Activated T-helper 1 cell treated with anti-CD3 and anti-CD28 coated beads, Interleukin-12 subunit alpha, Interleukin-12 subunit beta, Interleukin-2, Interleukin-4 antibody, amounts not matched to agents 30 ng/mL and 10 ng/mL and 1 ng/mL, durations not matched to agents 14 hours and 24 hours and 36 hours (primary cell): ENCODE measurements at regions of chr7 and their contacts with region 1.

Region 1: DNA sequence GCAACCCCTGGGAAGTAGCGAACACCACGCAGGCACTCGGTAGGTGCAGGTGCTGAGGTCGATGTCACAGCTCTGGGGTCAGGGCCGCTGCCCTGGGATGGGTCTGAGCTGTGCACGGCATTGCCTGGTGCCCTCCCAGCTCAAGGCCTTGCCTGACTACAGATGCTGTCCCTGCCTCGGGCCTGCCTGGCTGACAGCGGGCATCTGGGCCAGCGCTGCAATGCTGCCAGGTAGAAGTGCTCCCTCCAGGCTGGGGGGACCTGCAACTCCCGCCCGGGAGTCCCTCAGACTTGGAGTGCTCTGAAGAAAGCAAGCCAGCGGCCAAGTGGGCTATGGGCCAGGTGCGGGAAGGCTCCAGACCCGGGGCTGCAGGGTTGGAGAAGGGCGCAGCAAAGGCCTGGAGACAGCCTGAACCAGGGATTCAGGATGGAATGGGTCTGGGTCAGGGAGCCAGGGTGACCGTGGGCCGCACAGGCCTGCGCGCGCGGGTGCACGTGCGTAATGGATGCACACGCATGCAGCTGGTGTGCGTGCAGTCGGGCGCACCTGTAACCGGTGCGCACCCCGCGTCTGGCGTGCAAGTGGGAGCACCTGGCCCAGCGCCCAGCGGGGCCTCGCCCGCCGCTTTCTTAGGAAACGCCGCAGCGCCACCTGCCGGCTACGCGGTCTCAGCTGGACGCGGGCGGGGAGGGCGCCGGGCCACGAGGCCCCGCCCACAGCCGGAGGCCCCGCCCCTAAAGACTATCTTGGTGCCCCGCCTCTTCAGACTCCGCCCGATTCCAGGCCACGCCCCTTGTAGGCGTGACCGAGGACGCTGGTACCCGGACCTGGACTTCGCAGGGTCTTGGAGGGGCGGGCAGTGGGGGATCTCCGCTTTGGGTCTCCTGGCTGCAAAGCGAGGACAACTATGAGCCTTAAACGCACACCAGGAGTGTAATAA is 46.7 kb downstream of the MICALL2 start:
- DNase-seq: peak; percentile 79
- H3K4me3 Mint-ChIP-seq: no peak overlapping the region
- H3K27ac Mint-ChIP-seq: no peak overlapping the region
- H3K4me1 Mint-ChIP-seq: peaks cover 12% of the 10 kb centered on the region
- H3K27me3 Mint-ChIP-seq: peaks cover 2% of the 10 kb centered on the region

Region 2: DNA sequence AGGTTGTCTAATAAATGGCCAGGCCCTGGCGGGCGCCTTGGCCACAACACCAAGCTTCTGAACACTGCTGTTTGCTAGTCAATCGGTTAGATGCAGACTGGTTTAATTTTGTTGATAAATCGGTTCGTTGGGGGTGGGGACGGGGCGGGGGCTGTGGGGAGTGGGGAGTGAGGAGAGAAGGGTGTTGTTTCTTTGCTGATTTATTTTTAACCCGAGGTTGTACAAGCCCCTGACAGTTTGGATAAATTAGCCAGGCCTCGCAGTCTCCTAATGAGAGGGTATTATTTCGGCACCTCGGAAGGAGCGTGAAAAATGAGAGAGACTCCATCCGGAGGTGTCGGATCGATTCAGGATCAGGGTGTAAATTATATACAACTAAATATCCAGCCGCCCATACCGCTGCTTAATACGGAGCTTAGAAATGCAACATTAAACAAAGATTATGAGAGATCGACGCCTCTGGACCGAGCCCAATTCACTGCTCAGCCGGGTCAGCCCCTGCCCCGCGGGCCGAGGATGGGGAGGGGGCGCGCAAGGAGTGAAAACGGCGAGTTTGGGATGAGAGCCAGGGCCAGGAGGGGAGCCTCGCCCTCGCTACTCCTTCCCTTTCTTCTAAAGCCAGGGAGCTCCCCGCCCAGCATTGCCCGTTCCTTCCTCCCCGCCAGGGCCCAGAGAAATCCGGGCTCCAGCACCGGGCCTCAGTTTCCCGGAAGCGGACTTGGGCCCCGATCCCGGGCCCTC is 171.9 kb before region 1 on chr7:
- intact Hi-C with region 1: loop called (anchors 5 kb)
- DNase-seq: no peak
- H3K4me3 Mint-ChIP-seq: no peak overlapping the region
- H3K27ac Mint-ChIP-seq: peak overlapping the region; percentile 52
- H3K4me1 Mint-ChIP-seq: no peaks in the 10 kb centered on the region
- H3K27me3 Mint-ChIP-seq: peaks cover 55% of the 10 kb centered on the region

Region 3: DNA sequence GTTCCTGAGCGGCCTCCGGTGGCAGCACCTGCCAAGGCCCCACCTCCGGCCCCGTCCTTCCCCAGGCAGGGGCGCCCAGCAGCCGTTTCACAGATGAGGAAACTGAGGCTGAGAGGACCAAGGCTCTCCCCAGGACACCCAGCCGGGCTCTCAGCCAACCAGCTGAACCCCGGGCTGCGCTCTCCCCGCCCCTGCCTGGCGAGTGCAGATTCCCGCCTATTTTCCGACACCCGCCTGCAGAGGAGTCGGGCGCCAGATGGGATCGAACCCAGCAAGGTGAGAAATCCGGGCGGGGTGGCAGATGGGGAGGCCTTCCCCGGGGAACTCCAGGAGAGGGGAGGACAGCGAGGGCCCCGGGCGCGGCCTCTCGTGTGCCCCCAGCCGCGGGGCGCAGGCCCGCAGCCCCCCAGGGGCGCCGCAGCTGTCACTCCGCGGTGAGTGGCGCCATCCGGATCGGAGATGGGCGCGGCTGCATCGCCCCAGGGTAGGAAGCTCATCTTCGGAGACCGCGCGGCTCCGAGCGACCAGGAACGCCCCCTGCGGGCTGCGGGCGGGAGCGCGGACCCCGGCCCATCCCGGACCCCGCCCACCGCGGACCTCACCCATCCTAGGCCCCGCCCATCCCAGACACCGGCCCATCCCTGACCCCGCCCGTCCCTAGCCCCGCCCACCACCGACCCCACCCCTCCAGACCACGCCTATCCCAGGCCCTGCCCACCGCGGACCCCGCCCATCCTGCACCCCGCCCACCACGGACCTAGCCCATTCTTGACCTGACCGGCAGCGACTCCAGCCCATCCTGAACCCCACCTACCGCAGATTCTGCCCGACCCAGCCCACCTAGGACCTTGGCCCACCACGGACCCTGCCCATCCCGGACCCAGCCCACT is 43.7 kb before region 1 on chr7:
- intact Hi-C with region 1: loop called (anchors 1 kb)
- DNase-seq: no peak
- H3K4me3 Mint-ChIP-seq: no peak overlapping the region
- H3K27ac Mint-ChIP-seq: no peak overlapping the region
- H3K4me1 Mint-ChIP-seq: peaks cover 6% of the 10 kb centered on the region
- H3K27me3 Mint-ChIP-seq: peaks cover 23% of the 10 kb centered on the region

Region 4: DNA sequence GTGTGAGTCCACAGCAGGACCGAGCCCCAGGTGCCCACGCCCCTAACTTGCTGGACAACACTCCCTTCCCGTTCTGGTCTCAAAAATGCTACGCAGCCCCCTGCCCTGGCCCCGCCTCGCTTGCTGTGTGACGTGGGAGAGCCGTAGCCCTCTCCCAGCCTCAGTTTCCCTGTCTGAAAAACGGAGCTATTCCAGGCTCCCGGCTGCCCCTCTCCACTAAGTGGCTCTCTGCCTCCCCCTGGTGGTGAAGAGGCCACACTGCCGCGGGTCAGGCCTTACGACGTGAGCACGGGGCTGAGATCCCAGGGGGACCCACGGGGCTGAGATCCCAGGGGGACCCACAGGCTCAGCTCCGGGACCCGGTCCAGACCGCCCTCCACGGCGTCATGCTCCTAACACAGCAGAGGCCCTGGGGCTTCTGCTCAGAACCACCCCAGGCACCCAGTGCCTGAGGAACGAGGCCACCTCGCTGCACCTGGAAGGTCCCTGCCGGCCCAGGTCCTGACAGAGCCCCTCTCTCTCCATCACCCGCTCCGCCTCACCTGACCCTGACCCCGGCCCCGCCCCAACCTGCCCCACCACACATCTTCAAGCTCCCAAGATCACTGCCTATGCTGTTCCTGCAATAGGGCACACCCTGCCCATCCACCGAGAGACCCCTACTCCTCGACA is 20.0 kb after region 1 on chr7:
- intact Hi-C with region 1: loop called (anchors 2 kb)
- DNase-seq: peak; percentile 54
- H3K4me3 Mint-ChIP-seq: no peak overlapping the region
- H3K27ac Mint-ChIP-seq: no peak overlapping the region
- H3K4me1 Mint-ChIP-seq: peaks cover 5% of the 10 kb centered on the region
- H3K27me3 Mint-ChIP-seq: peaks cover 4% of the 10 kb centered on the region

Region 5: DNA sequence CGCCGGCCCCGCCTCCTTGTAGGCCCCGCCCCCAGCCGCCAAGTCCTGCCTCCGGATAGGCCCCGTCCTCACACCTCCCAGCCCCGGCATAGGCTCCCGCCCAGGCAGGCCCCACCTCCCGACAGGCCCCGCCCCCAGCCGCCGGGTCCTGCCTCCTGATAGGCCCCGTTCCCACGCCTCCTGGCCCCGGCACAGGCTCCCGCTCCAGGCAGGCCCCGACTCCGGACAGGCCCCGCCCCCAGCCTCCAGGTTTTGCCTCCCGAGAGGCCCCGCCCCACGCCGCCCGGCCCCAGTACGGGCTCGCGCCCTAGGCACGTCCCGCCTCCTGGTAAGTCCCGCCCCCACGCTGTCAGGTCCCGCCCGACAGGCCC is 46.9 kb after region 1 on chr7:
- intact Hi-C with region 1: loop called (anchors 1 kb)
- DNase-seq: peak; percentile 96
- H3K4me3 Mint-ChIP-seq: peak overlapping the region; percentile 72
- H3K27ac Mint-ChIP-seq: no peak overlapping the region
- H3K4me1 Mint-ChIP-seq: no peaks in the 10 kb centered on the region
- H3K27me3 Mint-ChIP-seq: peaks cover 4% of the 10 kb centered on the region

Region 6: GRCh38 chr7:1503816-1504775 is 91.5 kb after region 1 on chr7 and contains the start of gene INTS1:
- intact Hi-C with region 1: loop called (anchors 1 kb)
- DNase-seq: peak; percentile 90
- H3K4me3 Mint-ChIP-seq: peak within 1 kb of the TSS; percentile 89
- H3K27ac Mint-ChIP-seq: peak within 1 kb of the TSS; percentile 85
- H3K4me1 Mint-ChIP-seq: peaks cover 31% of the 10 kb centered on the region
- H3K27me3 Mint-ChIP-seq: no peaks in the 10 kb centered on the region
- total RNA-seq, gene INTS1: 94.3 and 97.9 TPM in 2 replicates